Activated B cell treated with CpG ODN at 0.5 μM for 24 hours (primary cell): ENCODE measurements at regions of chr1 and their contacts with region 1.

Region 1: GRCh38 chr1:92831762-92832536 is at the start of gene RPL5:
- DNase-seq: peak; percentile 98
- ATAC-seq: peak; percentile 90
- H3K4me3 Mint-ChIP-seq: peak within 1 kb of the TSS; percentile 99
- H3K27ac Mint-ChIP-seq: peak within 1 kb of the TSS; percentile 97
- H3K4me1 Mint-ChIP-seq: peaks cover 48% of the 10 kb centered on the region
- H3K27me3 Mint-ChIP-seq: no peaks in the 10 kb centered on the region
- CTCF ChIP-seq: no peak
- total RNA-seq, gene RPL5: 1,685 and 1,766 TPM in 2 replicates

Region 2: GRCh38 chr1:92804721-92805169 is 27.2 kb before region 1 on chr1:
- CTCF ChIA-PET with region 1: no interaction called
- POLR2A ChIA-PET with region 1: interaction called, 6 read pairs
- intact Hi-C with region 1: loop called (anchors 2 kb)
- DNase-seq: no peak
- ATAC-seq: peak; percentile 99
- H3K4me3 Mint-ChIP-seq: peak overlapping the region; percentile 47
- H3K27ac Mint-ChIP-seq: peak overlapping the region; percentile 88
- H3K4me1 Mint-ChIP-seq: peaks cover 15% of the 10 kb centered on the region
- H3K27me3 Mint-ChIP-seq: no peaks in the 10 kb centered on the region
- CTCF ChIP-seq: no peak

Region 3: GRCh38 chr1:92817986-92818764 is 13.8 kb before region 1 on chr1:
- CTCF ChIA-PET with region 1: interaction called, 17 read pairs
- POLR2A ChIA-PET with region 1: interaction called, 7 read pairs
- intact Hi-C with region 1: no loop called
- DNase-seq: no peak
- ATAC-seq: peak; percentile 61
- H3K4me3 Mint-ChIP-seq: no peak overlapping the region
- H3K27ac Mint-ChIP-seq: no peak overlapping the region
- H3K4me1 Mint-ChIP-seq: peaks cover 2% of the 10 kb centered on the region
- H3K27me3 Mint-ChIP-seq: peaks cover 1% of the 10 kb centered on the region
- CTCF ChIP-seq: no peak

Region 4: GRCh38 chr1:92843429-92844352 is 11.7 kb after region 1 on chr1:
- CTCF ChIA-PET with region 1: interaction called, 6 read pairs
- POLR2A ChIA-PET with region 1: interaction called, 16 read pairs
- intact Hi-C with region 1: no loop called
- DNase-seq: no peak
- ATAC-seq: no peak
- H3K4me3 Mint-ChIP-seq: no peak overlapping the region
- H3K27ac Mint-ChIP-seq: no peak overlapping the region
- H3K4me1 Mint-ChIP-seq: peaks cover 10% of the 10 kb centered on the region
- H3K27me3 Mint-ChIP-seq: no peaks in the 10 kb centered on the region
- CTCF ChIP-seq: no peak

Region 5: DNA sequence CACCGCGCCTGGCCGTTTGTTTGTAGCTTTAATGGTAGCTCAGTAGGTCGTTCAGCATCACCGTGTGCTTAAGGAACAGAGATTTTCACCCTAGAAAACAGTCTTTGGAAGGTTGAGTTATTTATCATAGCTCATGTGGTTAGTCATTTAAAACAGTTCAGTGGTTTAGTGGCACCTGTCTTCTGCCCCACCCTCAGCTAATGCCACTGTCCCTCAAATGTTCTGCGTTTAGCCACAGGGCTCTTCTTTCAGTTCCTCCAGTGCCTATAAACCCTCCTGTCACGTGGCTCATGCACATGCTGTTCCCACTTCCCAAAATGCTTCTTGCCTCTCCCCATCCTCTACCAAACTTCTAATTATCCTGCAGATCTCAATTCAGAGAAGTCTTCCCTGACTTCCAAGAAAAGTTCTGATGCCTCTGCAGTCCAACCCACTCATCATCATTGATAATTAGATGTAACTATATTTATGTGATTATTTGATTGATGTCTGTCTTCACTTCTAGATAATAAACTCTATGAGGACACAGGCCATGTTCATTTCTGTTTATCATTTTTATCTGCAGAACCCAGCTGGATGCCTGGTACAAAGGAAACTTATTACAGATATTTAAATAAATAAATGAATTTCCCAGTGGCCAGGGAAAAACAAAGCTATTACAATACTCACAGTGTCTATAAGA is 143.7 kb after region 1 on chr1:
- CTCF ChIA-PET with region 1: no interaction called
- POLR2A ChIA-PET with region 1: interaction called, 13 read pairs
- intact Hi-C with region 1: no loop called
- DNase-seq: peak; percentile 48
- ATAC-seq: peak; percentile 73
- H3K4me3 Mint-ChIP-seq: peak overlapping the region; percentile 67
- H3K27ac Mint-ChIP-seq: peak overlapping the region; percentile 99
- H3K4me1 Mint-ChIP-seq: peaks cover 91% of the 10 kb centered on the region
- H3K27me3 Mint-ChIP-seq: no peaks in the 10 kb centered on the region
- CTCF ChIP-seq: no peak

Region 6: DNA sequence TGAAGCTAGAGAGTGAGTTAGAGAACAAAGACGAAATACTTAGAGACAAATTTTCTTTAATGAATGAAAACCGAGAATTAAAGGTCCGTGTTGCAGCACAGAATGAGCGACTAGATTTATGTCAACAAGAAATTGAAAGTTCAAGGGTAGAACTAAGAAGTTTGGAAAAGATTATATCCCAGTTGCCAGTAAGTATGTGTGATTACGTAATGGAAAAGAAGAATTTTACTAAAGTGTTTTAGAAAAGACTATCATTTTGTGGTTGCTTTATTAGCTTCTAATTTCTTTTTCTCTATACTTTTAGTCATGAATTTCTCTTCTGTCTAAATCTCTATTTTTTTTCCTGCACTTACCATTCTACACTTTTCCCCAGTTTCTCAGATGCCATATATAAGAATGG is 375.3 kb after region 1 on chr1:
- CTCF ChIA-PET with region 1: no interaction called
- POLR2A ChIA-PET with region 1: no interaction called
- intact Hi-C with region 1: no loop called
- DNase-seq: no peak
- ATAC-seq: no peak
- H3K4me3 Mint-ChIP-seq: no peak overlapping the region
- H3K27ac Mint-ChIP-seq: no peak overlapping the region
- H3K4me1 Mint-ChIP-seq: no peaks in the 10 kb centered on the region
- H3K27me3 Mint-ChIP-seq: no peaks in the 10 kb centered on the region
- CTCF ChIP-seq: no peak

Region 7: DNA sequence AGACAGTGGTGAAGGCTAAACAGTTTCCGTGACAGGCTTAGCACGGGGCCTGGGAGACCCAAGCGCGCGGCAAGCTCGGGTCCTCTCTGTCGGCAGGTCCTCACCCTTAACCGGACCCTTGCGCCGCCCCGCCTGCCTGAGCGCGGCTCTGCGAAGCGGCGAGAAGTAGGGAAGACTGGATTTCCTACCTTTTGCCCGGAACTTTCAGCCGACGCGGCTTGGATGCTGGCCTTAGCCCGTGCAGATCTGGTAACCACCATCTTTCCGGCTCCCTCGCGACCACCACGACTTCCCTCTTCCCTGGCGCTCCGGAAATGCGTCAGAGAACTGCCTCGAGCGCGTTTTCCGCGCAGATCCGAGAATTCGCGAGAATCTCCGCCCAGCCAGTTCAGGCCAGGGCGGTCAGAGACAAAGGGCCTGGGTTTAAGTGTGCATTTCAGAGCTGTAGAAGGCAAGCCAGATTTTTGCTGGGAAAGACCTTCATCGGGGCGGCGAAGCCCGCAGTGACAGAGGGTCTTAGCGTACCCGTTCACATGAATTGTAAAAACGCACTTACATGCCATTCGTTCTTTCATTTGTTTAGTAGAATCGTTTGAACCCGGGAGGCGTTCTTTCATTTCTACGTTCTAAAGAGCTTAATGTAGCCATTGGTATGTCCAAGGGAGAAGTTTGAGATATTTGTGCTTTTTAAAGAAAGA is 1047.1 kb after region 1 on chr1 and contains the start of gene DNTTIP2:
- CTCF ChIA-PET with region 1: no interaction called
- POLR2A ChIA-PET with region 1: no interaction called
- intact Hi-C with region 1: loop called (anchors 10 kb)
- DNase-seq: peak; percentile 77
- ATAC-seq: peak; percentile 91
- H3K4me3 Mint-ChIP-seq: peak within 1 kb of the TSS; percentile 96
- H3K27ac Mint-ChIP-seq: peak within 1 kb of the TSS; percentile 97
- H3K4me1 Mint-ChIP-seq: peaks cover 48% of the 10 kb centered on the region
- H3K27me3 Mint-ChIP-seq: no peaks in the 10 kb centered on the region
- CTCF ChIP-seq: no peak
- total RNA-seq, gene DNTTIP2: 65.6 and 69.7 TPM in 2 replicates